ENCODE measurements at regions of chr1 and their contacts with region 1.

Region 1: GRCh38 chr1:205658943-205659581 is 21.2 kb downstream of the SLC45A3 start:
- DNase-seq: peak; percentile 91
- H3K27ac ChIP-seq: no peak overlapping the region
- CTCF ChIP-seq: peak; percentile 88

Region 2: DNA sequence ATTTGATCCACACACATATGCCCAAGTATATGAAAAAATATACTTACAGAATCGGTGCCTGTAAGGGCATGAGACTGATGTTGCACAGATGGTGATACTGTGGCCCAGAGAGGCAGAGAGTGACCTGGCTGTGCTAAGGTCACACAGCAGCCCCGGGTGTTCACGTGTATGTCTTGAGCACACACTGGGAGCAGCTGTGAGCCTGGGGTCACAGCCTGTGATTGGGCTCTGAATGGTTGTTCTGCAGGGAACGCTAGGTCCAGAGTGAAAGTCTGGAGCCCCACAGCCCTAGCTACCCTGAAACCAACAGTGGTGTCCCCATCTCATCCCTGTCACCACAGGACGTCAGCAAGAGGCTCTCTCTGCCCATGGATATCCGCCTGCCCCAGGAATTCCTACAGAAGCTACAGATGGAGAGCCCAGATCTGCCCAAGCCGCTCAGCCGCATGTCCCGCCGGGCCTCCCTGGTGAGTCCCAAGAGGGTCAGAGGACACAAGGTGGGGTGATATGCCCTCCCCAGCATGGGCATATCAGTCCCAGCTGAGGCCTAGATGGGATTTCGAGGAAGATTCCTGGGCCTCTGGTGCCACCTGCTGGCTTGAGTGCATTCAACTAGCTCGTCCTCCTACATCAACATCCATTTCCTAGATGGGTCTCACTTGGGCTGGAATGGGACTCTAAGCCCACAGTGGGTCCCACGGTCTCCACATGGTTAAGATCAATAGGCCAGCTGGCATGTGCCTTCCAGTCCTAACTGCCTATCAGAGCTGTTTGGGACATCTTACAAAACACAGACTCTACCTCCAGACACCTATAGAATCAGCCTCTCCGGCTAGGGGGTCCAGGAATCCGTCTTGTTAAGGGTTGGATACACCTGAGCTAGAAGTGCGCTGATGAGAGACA is 134.9 kb before region 1 on chr1:
- CTCF ChIA-PET with region 1: interaction called, 75 read pairs
- POLR2A ChIA-PET with region 1: no interaction called
- DNase-seq: peak; percentile 91
- H3K27ac ChIP-seq: peak overlapping the region; percentile 19; the same call in 1 of the 2 replicates
- CTCF ChIP-seq: peak; percentile 75

Region 3: DNA sequence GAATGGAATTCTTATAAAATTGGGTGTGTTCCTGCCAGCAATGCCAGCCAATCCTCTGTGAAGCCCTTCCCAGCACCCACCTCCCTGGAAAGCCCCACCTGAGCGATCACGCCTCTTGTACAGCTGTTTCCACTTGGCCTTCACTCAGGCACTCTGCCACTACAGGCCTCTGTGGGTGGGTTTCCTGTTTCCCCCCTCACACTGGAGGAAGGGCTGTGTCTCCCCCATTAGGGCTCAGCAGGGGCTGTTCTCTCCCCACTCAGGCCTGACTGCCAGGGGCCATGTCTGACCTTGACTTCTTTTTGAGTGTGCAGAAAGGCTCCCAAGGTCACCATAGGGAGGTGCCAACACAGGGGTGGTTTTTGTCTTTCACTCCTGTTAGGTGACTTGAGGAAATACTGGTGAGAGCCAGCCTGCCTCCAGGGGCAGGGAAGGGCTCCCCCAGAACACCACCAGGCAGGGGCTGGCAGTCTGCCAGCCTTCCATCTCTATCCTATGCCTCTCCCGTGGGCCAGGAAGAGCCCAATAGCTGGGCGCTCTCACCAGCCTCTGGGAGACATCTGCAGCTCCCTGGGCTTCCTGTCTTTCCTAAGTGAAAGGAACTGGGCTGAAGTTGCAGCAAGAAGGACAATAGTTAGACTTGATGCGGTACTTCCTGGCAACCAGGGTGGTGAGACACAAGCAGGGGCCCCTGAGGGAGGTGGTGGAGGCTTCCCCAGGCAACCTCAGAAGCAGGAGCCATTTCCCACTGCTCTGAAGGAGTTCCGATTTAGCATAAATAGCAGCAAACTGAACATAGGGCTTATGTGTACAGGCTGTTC is 76.4 kb before region 1 on chr1:
- CTCF ChIA-PET with region 1: interaction called, 472 read pairs
- POLR2A ChIA-PET with region 1: no interaction called
- DNase-seq: no peak
- H3K27ac ChIP-seq: peak overlapping the region; percentile 7; the same call in 1 of the 2 replicates
- CTCF ChIP-seq: no peak

Region 4: GRCh38 chr1:205631727-205632373 is 27.2 kb before region 1 on chr1 and contains the start of gene ELK4:
- CTCF ChIA-PET with region 1: interaction called, 48 read pairs
- POLR2A ChIA-PET with region 1: no interaction called
- DNase-seq: peak; percentile 99
- H3K27ac ChIP-seq: peak within 1 kb of the TSS; percentile 98
- CTCF ChIP-seq: peak; percentile 76

Region 5: GRCh38 chr1:205680073-205680851 is 21.2 kb after region 1 on chr1 and contains the start of gene SLC45A3:
- CTCF ChIA-PET with region 1: interaction called, 28 read pairs
- POLR2A ChIA-PET with region 1: no interaction called
- DNase-seq: peak; percentile 55
- H3K27ac ChIP-seq: peak within 1 kb of the TSS; percentile 62
- CTCF ChIP-seq: no peak

Region 6: GRCh38 chr1:205711104-205712020 is 52.3 kb after region 1 on chr1:
- CTCF ChIA-PET with region 1: interaction called, 174 read pairs
- POLR2A ChIA-PET with region 1: interaction called, 4 read pairs
- DNase-seq: peak; percentile 74
- H3K27ac ChIP-seq: no peak overlapping the region
- CTCF ChIP-seq: peak; percentile 79